ENCODE measurements at regions of chr1 and their contacts with region 1.

Region 1: DNA sequence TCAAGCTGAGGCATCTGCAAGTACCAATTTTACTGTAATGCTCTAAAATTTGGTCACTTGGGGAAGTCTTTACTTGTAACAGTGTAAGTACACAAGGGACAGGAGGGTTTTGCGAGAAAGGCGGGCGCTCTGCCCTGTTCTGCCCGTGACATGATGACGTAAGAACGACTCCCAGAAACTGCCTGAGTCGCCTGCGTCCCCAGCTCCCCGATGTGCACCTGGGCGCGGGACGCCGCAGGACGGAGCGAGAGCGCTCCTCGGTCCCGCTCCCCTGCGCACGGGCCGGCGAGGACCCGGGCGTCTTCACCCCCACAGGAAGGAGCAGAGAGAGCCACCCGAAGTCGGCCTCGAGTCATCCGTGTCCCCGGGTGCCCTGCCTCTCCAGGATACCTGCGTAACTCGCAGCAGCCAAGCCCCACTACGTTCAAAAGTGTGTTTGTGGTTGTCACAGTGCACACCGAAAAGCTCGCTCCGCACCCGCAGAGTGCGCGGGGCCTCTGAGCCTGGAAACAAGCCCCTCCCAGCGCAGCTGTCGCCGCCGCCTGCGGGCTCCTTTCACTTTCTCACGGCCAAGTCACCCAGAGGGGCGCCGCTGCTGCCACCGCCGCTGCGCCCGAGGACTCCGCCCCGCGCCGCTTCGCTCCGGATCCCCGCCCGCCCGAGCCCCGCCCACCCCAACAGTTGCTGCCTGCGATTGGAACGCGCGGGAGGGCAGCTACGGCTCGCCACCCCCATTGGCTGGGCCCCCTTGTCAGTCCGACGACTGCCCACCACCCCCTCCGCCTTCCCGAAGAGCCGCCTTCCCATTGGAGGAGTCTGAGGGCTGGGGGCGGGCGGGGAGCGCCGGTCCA is 3.2 kb upstream of the ZBTB18 start:
- DNase-seq: peak; percentile 98
- H3K4me3 Mint-ChIP-seq: peak overlapping the region; percentile 94
- H3K27ac Mint-ChIP-seq: peak overlapping the region; percentile 96
- H3K4me1 Mint-ChIP-seq: peaks cover 45% of the 10 kb centered on the region
- H3K27me3 Mint-ChIP-seq: no peaks in the 10 kb centered on the region

Region 2: GRCh38 chr1:243708210-243708609 is 339.6 kb before region 1 on chr1:
- CTCF ChIA-PET with region 1: interaction called, 5 read pairs
- intact Hi-C with region 1: loop called (anchors 1 kb)
- DNase-seq: no peak
- H3K4me3 Mint-ChIP-seq: no peak overlapping the region
- H3K27ac Mint-ChIP-seq: no peak overlapping the region
- H3K4me1 Mint-ChIP-seq: peaks cover 9% of the 10 kb centered on the region
- H3K27me3 Mint-ChIP-seq: no peaks in the 10 kb centered on the region

Region 3: GRCh38 chr1:244074559-244075171 is 26.8 kb after region 1 on chr1:
- CTCF ChIA-PET with region 1: no interaction called
- intact Hi-C with region 1: loop called (anchors 1 kb)
- DNase-seq: peak; percentile 73
- H3K4me3 Mint-ChIP-seq: peak overlapping the region; percentile 61
- H3K27ac Mint-ChIP-seq: no peak overlapping the region
- H3K4me1 Mint-ChIP-seq: peaks cover 38% of the 10 kb centered on the region
- H3K27me3 Mint-ChIP-seq: no peaks in the 10 kb centered on the region

Region 4: GRCh38 chr1:244302889-244303613 is 255.2 kb after region 1 on chr1:
- CTCF ChIA-PET with region 1: no interaction called
- intact Hi-C with region 1: loop called (anchors 1 kb)
- DNase-seq: no peak
- H3K4me3 Mint-ChIP-seq: no peak overlapping the region
- H3K27ac Mint-ChIP-seq: no peak overlapping the region
- H3K4me1 Mint-ChIP-seq: peaks cover 7% of the 10 kb centered on the region
- H3K27me3 Mint-ChIP-seq: peaks cover 3% of the 10 kb centered on the region

Region 5: DNA sequence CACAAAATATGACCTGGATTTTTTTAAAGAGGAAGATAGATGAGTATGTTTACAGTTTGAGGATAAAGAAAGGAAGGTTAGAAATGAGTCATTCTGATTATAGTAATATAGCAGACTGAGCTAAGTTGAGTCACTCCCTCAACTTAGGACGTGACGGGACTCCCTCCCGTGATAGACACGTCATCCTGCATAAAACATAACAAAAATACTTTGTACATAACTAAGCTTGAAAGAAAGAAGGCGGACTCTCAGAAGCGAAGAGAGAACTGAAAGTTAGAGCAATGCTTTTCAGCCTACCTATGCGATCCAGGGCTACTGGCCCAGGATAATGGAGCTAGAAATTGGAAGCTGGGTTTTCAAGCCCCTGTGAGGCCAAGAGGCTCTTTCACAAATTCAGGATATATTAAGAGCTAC is 552.1 kb after region 1 on chr1:
- CTCF ChIA-PET with region 1: no interaction called
- intact Hi-C with region 1: loop called (anchors 5 kb)
- DNase-seq: peak; percentile 79
- H3K4me3 Mint-ChIP-seq: peak overlapping the region; percentile 64
- H3K27ac Mint-ChIP-seq: peak overlapping the region; percentile 87
- H3K4me1 Mint-ChIP-seq: peaks cover 21% of the 10 kb centered on the region
- H3K27me3 Mint-ChIP-seq: peaks cover 2% of the 10 kb centered on the region

Region 6: DNA sequence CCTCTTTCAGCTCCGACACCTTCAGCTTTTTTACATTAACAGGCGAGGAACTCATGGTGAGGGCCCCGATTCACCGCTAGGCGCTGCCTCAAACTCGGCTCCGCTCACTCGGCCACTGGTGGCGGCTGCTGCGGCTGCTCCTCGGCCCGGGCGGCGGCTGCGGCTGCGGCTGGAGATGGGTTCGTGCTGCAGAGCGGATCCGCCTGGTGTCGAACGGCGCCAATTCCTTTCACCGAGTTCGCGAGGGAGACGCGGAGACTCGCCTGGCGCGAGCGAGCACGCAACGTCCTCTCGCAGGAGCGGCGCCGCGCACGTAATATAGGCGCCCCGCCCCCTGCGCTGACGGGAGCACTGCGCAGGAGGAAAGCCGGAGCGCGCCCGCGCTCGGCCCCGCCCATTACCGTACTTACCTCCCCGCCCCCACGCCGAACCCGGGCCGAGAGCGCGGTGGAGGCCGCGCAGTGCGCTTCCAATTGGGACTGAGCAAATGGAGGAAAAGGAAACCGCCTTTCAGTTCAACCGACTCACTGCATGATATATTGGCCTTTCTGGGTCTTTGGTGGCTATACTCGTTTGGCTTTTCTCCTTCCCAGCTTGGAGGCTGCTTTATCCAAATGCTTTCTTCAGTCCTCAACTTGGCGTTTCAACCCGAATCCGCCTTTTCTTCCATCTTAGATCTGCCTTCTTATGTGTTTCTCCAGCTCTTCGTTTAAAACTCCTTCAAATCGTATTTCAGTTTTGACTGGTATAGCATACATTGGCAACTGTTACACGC is 816.6 kb after region 1 on chr1 and contains the start of gene HNRNPU:
- CTCF ChIA-PET with region 1: no interaction called
- intact Hi-C with region 1: loop called (anchors 1 kb)
- DNase-seq: peak; percentile 95
- H3K4me3 Mint-ChIP-seq: peak within 1 kb of the TSS; percentile 90
- H3K27ac Mint-ChIP-seq: peak within 1 kb of the TSS; percentile 99
- H3K4me1 Mint-ChIP-seq: peaks cover 31% of the 10 kb centered on the region
- H3K27me3 Mint-ChIP-seq: no peaks in the 10 kb centered on the region
- total RNA-seq, gene HNRNPU: 331 to 338 TPM